Thyroid gland (tissue), 4 donors: ENCODE measurements at regions of chr6 and their contacts with region 1.

Region 1: GRCh38 chr6:159941286-159942113 is 27.4 kb upstream of the IGF2R start:
- DNase-seq: no peak
- H3K4me3 ChIP-seq: no peak overlapping the region
- H3K27ac ChIP-seq: no peak overlapping the region
- H3K4me1 ChIP-seq: peaks cover 0 to 12% of the 10 kb centered on the region in 2 donors
- H3K27me3 ChIP-seq: no peaks in the 10 kb centered on the region
- CTCF ChIP-seq: peak in 4 of 6 experiments; percentile 50 to 73 (median 62)
- POLR2A ChIP-seq: no peak

Region 2: GRCh38 chr6:159875194-159875593 is 66.3 kb before region 1 on chr6:
- intact Hi-C with region 1: loop called (anchors 5 kb)
- DNase-seq: no peak
- H3K4me3 ChIP-seq: no peak overlapping the region
- H3K27ac ChIP-seq: no peak overlapping the region
- H3K4me1 ChIP-seq: peaks cover 17 to 36% of the 10 kb centered on the region in 2 donors
- H3K27me3 ChIP-seq: no peaks in the 10 kb centered on the region
- CTCF ChIP-seq: no peak
- POLR2A ChIP-seq: no peak

Region 3: GRCh38 chr6:160030103-160030502 is 88.6 kb after region 1 on chr6:
- intact Hi-C with region 1: no loop called
- DNase-seq: peak; percentile 94 to 97
- H3K4me3 ChIP-seq: no peak overlapping the region
- H3K27ac ChIP-seq: peak overlapping the region; percentile 76 to 82 (median 76)
- H3K4me1 ChIP-seq: peaks cover 16 to 21% of the 10 kb centered on the region in 2 donors
- H3K27me3 ChIP-seq: no peaks in the 10 kb centered on the region
- CTCF ChIP-seq: peak in 3 of 6 experiments; percentile 19 to 48 (median 20)
- POLR2A ChIP-seq: peak in 1 of 2 donors; percentile 42

Region 4: DNA sequence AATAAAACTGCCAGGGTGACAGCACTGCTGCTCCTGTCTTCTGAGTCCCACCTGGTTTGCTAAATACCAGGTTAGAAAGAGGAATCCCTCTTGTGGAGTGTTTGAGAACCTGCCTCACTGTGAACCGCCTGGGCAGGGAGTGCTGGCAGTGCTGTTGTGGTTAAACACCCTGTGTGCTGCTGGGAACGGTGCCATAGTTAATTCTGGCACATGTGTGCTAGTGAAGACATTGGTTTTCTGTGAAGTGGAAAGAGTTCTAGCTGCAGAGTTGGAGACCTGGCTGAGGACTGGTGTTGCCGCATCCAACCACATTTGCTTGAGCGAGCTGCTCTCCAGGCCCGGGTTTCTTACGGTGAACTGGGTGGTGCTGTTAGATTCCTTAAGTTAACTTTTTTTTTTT is 100.1 kb after region 1 on chr6:
- intact Hi-C with region 1: no loop called
- DNase-seq: peak; percentile 94 to 96
- H3K4me3 ChIP-seq: no peak overlapping the region
- H3K27ac ChIP-seq: peak overlapping the region in 1 of 3 donors; percentile 40
- H3K4me1 ChIP-seq: peaks cover 13 to 23% of the 10 kb centered on the region in 2 donors
- H3K27me3 ChIP-seq: no peaks in the 10 kb centered on the region
- CTCF ChIP-seq: peak in 5 of 6 experiments; percentile 30 to 74 (median 54)
- POLR2A ChIP-seq: no peak